ENCODE measurements at regions of chr2 and their contacts with region 1.

Region 1: DNA sequence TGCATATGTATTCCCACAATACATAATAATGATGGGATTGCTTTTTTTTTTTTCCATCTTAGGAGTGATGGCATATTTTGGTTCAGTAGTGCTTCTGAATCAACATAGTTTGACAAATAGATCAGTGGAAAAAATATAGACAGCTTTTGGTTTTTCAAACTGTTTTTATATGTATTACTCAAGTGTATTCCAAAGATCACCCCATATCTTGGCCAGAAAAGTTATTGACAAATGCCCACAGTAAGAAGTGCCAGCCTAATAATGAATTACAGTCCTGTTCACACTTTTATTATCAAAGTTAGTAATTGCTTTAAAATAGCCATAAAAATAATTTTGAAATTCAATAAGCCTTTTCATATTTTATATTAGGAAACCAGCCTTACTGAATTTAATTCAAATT is 95.0 kb downstream of the TMEFF2 start:
- DNase-seq: no peak
- ATAC-seq: no peak
- H3K4me3 ChIP-seq: no peak overlapping the region
- H3K27ac ChIP-seq: no peak overlapping the region
- H3K4me1 ChIP-seq: no peaks in the 10 kb centered on the region
- H3K27me3 ChIP-seq: no peaks in the 10 kb centered on the region
- CTCF ChIP-seq: no peak
- POLR2A ChIP-seq: no peak
- RAD21 ChIP-seq: no peak

Region 2: GRCh38 chr2:192051533-192051932 is 48.2 kb before region 1 on chr2:
- CTCF ChIA-PET with region 1: no interaction called
- POLR2A ChIA-PET with region 1: no interaction called
- RAD21 ChIA-PET with region 1: no interaction called
- intact Hi-C with region 1: loop called (anchors 5 kb)
- DNase-seq: no peak
- ATAC-seq: no peak
- H3K4me3 ChIP-seq: no peak overlapping the region
- H3K27ac ChIP-seq: no peak overlapping the region
- H3K4me1 ChIP-seq: no peaks in the 10 kb centered on the region
- H3K27me3 ChIP-seq: no peaks in the 10 kb centered on the region
- CTCF ChIP-seq: no peak
- POLR2A ChIP-seq: no peak
- RAD21 ChIP-seq: no peak

Region 3: GRCh38 chr2:192123847-192124246 is 24.1 kb after region 1 on chr2:
- CTCF ChIA-PET with region 1: no interaction called
- POLR2A ChIA-PET with region 1: no interaction called
- RAD21 ChIA-PET with region 1: no interaction called
- intact Hi-C with region 1: no loop called
- DNase-seq: no peak
- ATAC-seq: no peak
- H3K4me3 ChIP-seq: no peak overlapping the region
- H3K27ac ChIP-seq: no peak overlapping the region
- H3K4me1 ChIP-seq: no peaks in the 10 kb centered on the region
- H3K27me3 ChIP-seq: no peaks in the 10 kb centered on the region
- CTCF ChIP-seq: no peak
- POLR2A ChIP-seq: no peak
- RAD21 ChIP-seq: no peak

Measured in HCT116 (cell line).